ENCODE measurements at regions of chr4 and their contacts with region 1.

Region 1: GRCh38 chr4:161680146-161680545 is 483.7 kb downstream of the FSTL5 start:
- DNase-seq: no peak
- H3K4me3 ChIP-seq: no peak overlapping the region
- H3K27ac ChIP-seq: no peak overlapping the region
- H3K4me1 ChIP-seq: no peaks in the 10 kb centered on the region
- H3K27me3 ChIP-seq: no peaks in the 10 kb centered on the region
- CTCF ChIP-seq: no peak

Region 2: DNA sequence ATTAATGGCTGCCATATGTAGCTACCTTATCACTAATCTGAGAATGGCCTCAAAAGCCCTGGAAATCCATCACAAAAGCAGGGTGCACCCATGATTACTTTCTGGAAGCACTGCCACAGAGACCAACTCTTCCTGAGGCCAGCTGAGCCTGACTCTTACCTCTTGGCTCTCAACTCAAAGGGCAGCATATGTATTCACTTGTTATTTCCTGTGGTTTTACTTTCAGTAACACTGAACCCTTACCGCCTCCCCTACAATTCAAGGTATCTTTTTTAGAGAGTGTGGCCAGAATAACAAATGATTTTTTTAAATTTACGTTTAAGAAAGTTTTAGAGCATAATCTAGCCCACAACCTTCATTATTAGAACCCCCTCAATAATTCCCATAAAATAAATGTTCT is 48.8 kb after region 1 on chr4:
- CTCF ChIA-PET with region 1: no interaction called
- POLR2A ChIA-PET with region 1: no interaction called
- intact Hi-C with region 1: loop called (anchors 1 kb)
- DNase-seq: no peak
- H3K4me3 ChIP-seq: no peak overlapping the region
- H3K27ac ChIP-seq: no peak overlapping the region
- H3K4me1 ChIP-seq: no peaks in the 10 kb centered on the region
- H3K27me3 ChIP-seq: no peaks in the 10 kb centered on the region
- CTCF ChIP-seq: no peak

Region 3: GRCh38 chr4:161828061-161828460 is 147.9 kb after region 1 on chr4:
- CTCF ChIA-PET with region 1: no interaction called
- POLR2A ChIA-PET with region 1: no interaction called
- intact Hi-C with region 1: no loop called
- DNase-seq: peak in 1 of 2 experiments; percentile 28
- H3K4me3 ChIP-seq: no peak overlapping the region
- H3K27ac ChIP-seq: no peak overlapping the region
- H3K4me1 ChIP-seq: no peaks in the 10 kb centered on the region
- H3K27me3 ChIP-seq: no peaks in the 10 kb centered on the region
- CTCF ChIP-seq: no peak